ENCODE measurements at regions of chr11 and their contacts with region 1.

Region 1: DNA sequence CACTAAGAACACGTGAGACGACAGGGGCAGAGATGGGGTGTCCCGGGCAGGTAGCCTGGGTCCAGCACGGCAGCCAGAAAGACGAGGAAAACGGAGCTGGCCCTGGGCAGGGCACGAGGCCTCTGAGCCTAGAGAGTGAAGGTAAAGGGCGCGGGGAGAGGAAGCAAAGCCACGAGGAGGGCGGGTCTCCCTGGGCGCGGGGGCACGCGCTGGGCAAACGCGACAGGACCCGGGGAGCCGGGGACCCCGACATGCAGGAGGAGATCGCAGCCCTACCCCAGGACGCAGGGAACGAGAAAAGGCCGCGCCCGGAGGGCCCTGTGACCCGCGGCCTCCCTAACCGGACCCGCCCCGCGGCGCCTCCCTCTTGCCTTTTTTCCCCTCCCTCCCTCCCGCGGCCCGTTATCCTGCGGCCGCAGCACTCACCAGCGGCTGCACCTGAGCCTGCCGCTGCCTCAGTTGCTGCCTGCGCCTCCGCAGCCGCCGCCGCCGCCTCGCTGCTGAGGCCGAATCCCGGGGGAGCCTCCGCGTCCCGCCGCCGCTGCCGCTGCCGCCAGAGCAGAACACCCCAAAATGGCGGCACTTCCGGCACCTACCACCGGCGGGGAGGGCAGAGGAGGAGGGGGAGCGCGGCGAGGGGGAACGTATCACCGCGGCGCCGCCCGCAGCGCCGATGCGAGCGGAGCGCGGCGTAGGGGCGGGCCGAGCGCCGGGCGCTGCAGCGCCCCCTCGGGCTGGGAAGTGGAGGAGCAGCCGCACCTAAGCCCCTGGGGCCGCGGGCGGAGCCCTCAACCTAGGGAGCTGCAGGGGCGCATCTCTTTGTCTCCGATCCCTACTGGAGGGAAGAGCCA is at the start of gene CELF1:
- DNase-seq: peak; percentile 85 to 97 (median 92)
- ATAC-seq: peak; percentile 96
- H3K4me3 ChIP-seq: peak within 1 kb of the TSS; percentile 86 to 92
- H3K4me3 Mint-ChIP-seq: peak within 1 kb of the TSS; percentile 93
- H3K27ac ChIP-seq: peak within 1 kb of the TSS; percentile 69 to 82
- H3K27ac Mint-ChIP-seq: peak within 1 kb of the TSS; percentile 97
- H3K4me1 ChIP-seq: peaks cover 41% of the 10 kb centered on the region
- H3K4me1 Mint-ChIP-seq: peaks cover 45% of the 10 kb centered on the region
- H3K27me3 ChIP-seq: no peaks in the 10 kb centered on the region
- H3K27me3 Mint-ChIP-seq: no peaks in the 10 kb centered on the region
- CTCF ChIP-seq: peak; percentile 85
- total RNA-seq, gene CELF1: 93.2 to 96.1 TPM

Region 2: DNA sequence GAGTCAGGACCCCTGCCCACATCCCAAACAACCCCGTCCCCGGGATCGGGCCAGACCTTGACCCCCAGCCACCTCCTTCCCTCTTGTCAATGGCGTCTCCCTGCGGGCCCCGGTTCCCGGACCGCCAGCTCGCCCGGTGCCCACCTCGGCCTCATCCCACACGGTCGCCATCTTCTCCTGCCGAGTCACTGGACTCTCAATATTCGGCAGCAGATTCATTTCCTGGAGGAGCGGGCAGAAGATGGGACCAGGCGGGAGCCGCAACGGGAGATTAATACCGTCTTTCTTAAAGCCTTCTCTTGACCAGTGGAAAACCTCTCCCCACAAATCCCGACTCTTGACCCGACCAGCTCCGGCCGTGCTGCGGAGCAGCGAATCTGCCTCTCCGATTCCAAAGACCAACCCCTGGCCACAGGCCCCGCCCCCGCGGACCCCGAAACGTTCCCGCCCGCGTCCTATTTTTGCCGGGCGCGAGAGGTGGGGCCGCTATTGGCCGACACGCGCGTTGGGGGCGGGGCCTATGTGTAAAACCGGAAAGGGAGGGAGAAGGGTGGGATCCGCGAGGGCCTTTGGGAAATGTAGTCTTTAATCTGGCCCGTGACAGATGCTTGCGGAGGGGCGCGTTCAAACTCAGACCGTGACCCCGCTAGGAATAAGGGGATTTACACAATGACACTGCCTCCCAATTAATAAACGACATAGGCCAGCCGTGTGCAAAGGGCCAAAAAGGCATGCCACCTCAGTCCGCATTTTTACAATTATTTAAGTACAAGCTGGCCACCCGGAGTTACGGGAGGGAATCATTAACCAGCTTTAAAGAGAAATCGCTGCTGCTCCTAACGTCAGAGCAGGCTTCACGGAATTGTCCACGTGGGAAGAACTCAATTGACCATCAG is 126.5 kb before region 1 on chr11 and contains the start of gene PSMC3:
- CTCF ChIA-PET with region 1: no interaction called
- POLR2A ChIA-PET with region 1: no interaction called
- intact Hi-C with region 1: loop called (anchors 1 kb)
- DNase-seq: peak; percentile 96 to 99 (median 98)
- ATAC-seq: peak; percentile 98
- H3K4me3 ChIP-seq: peak within 1 kb of the TSS; percentile 68 to 98
- H3K4me3 Mint-ChIP-seq: peak within 1 kb of the TSS; percentile 100
- H3K27ac ChIP-seq: peak within 1 kb of the TSS; percentile 77 to 81
- H3K27ac Mint-ChIP-seq: peak within 1 kb of the TSS; percentile 98
- H3K4me1 ChIP-seq: peaks cover 14% of the 10 kb centered on the region
- H3K4me1 Mint-ChIP-seq: peaks cover 28% of the 10 kb centered on the region
- H3K27me3 ChIP-seq: no peaks in the 10 kb centered on the region
- H3K27me3 Mint-ChIP-seq: no peaks in the 10 kb centered on the region
- CTCF ChIP-seq: no peak
- total RNA-seq, gene PSMC3: 58.1 to 63.4 TPM

Region 3: GRCh38 chr11:47485110-47485509 is 67.7 kb before region 1 on chr11:
- CTCF ChIA-PET with region 1: no interaction called
- POLR2A ChIA-PET with region 1: no interaction called
- intact Hi-C with region 1: loop called in 1 of 2 experiments (anchors 5 kb)
- DNase-seq: no peak
- ATAC-seq: no peak
- H3K4me3 ChIP-seq: no peak overlapping the region
- H3K4me3 Mint-ChIP-seq: no peak overlapping the region
- H3K27ac ChIP-seq: no peak overlapping the region
- H3K27ac Mint-ChIP-seq: no peak overlapping the region
- H3K4me1 ChIP-seq: no peaks in the 10 kb centered on the region
- H3K4me1 Mint-ChIP-seq: no peaks in the 10 kb centered on the region
- H3K27me3 ChIP-seq: no peaks in the 10 kb centered on the region
- H3K27me3 Mint-ChIP-seq: no peaks in the 10 kb centered on the region
- CTCF ChIP-seq: no peak

Region 4: DNA sequence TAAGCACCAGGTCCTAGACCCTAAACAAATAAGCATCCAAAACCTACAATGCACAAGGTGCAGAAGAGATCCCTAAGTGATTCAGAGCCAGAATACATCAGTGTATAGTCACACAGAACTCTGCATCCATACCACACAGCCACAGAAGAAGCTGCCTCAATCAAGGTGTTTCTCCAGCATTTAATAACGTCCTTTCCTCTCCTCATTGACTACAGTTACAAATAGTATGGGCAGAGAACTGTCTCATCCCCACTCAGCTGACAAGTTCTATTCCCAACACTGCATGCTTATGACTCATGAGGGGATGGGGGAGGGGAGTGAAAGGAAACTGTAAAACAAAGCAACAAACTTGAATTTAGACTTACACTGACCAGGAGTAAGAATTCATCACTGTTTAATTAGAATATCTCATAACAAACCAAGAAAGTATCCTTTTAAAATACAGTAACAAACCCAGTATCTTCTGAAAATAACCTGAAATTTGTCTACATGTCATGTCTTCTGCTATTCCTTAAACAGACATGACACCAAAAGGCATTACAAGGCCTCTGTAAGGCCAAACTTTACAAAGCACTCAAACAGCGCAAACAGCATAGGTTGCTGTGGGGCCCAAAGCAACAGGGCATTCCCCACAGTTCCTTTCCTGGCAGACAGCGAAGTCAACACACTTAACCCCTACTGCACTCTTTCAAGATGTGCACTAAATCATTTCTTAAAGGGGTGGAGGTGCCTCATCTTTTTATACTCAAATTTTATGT is 29.1 kb before region 1 on chr11:
- CTCF ChIA-PET with region 1: no interaction called
- POLR2A ChIA-PET with region 1: interaction called, 3 read pairs
- intact Hi-C with region 1: loop called in 1 of 2 experiments (anchors 2 kb)
- DNase-seq: peak in 7 of 9 experiments; percentile 14 to 83 (median 41)
- ATAC-seq: peak; percentile 80
- H3K4me3 ChIP-seq: no peak overlapping the region
- H3K4me3 Mint-ChIP-seq: peak overlapping the region; percentile 63
- H3K27ac ChIP-seq: peak overlapping the region; percentile 22 to 64
- H3K27ac Mint-ChIP-seq: peak overlapping the region; percentile 91
- H3K4me1 ChIP-seq: peaks cover 47% of the 10 kb centered on the region
- H3K4me1 Mint-ChIP-seq: peaks cover 66% of the 10 kb centered on the region
- H3K27me3 ChIP-seq: no peaks in the 10 kb centered on the region
- H3K27me3 Mint-ChIP-seq: no peaks in the 10 kb centered on the region
- CTCF ChIP-seq: no peak

Region 5: GRCh38 chr11:47578524-47579460 is 26.0 kb after region 1 on chr11 and contains the starts of genes KBTBD4 and NDUFS3:
- CTCF ChIA-PET with region 1: interaction called, 7 read pairs
- POLR2A ChIA-PET with region 1: interaction called, 5 read pairs
- intact Hi-C with region 1: loop called (anchors 1 kb)
- DNase-seq: peak; percentile 74 to 95 (median 89)
- ATAC-seq: peak; percentile 94
- H3K4me3 ChIP-seq: peak within 1 kb of the TSS; percentile 90 to 92
- H3K4me3 Mint-ChIP-seq: peak within 1 kb of the TSS; percentile 99
- H3K27ac ChIP-seq: peak within 1 kb of the TSS; percentile 76 to 84
- H3K27ac Mint-ChIP-seq: peak within 1 kb of the TSS; percentile 97
- H3K4me1 ChIP-seq: peaks cover 31% of the 10 kb centered on the region
- H3K4me1 Mint-ChIP-seq: peaks cover 54% of the 10 kb centered on the region
- H3K27me3 ChIP-seq: no peaks in the 10 kb centered on the region
- H3K27me3 Mint-ChIP-seq: no peaks in the 10 kb centered on the region
- CTCF ChIP-seq: no peak
- total RNA-seq, gene KBTBD4: 31.8 to 32.6 TPM
- total RNA-seq, gene NDUFS3: 159 to 179 TPM

Region 6: GRCh38 chr11:47715082-47715669 is 162.4 kb after region 1 on chr11 and contains the start of gene AGBL2:
- CTCF ChIA-PET with region 1: no interaction called
- POLR2A ChIA-PET with region 1: no interaction called
- intact Hi-C with region 1: loop called in 1 of 2 experiments (anchors 10 kb)
- DNase-seq: peak; percentile 70 to 91 (median 86)
- ATAC-seq: peak; percentile 99
- H3K4me3 ChIP-seq: peak within 1 kb of the TSS; percentile 66 to 88
- H3K4me3 Mint-ChIP-seq: peak within 1 kb of the TSS; percentile 96
- H3K27ac ChIP-seq: peak within 1 kb of the TSS; percentile 81 to 88
- H3K27ac Mint-ChIP-seq: peak within 1 kb of the TSS; percentile 94
- H3K4me1 ChIP-seq: peaks cover 14% of the 10 kb centered on the region
- H3K4me1 Mint-ChIP-seq: peaks cover 21% of the 10 kb centered on the region
- H3K27me3 ChIP-seq: no peaks in the 10 kb centered on the region
- H3K27me3 Mint-ChIP-seq: no peaks in the 10 kb centered on the region
- CTCF ChIP-seq: no peak
- total RNA-seq, gene AGBL2: 3.6 to 5.0 TPM

Region 7: GRCh38 chr11:47847892-47848635 is 295.3 kb after region 1 on chr11 and contains the start of gene NUP160:
- CTCF ChIA-PET with region 1: no interaction called
- POLR2A ChIA-PET with region 1: interaction called, 3 read pairs
- intact Hi-C with region 1: loop called (anchors 10 kb)
- DNase-seq: peak; percentile 70 to 92 (median 88)
- ATAC-seq: peak; percentile 87
- H3K4me3 ChIP-seq: peak within 1 kb of the TSS; percentile 89 to 99
- H3K4me3 Mint-ChIP-seq: peak within 1 kb of the TSS; percentile 100
- H3K27ac ChIP-seq: peak within 1 kb of the TSS; percentile 88 to 95
- H3K27ac Mint-ChIP-seq: peak within 1 kb of the TSS; percentile 99
- H3K4me1 ChIP-seq: peaks cover 35% of the 10 kb centered on the region
- H3K4me1 Mint-ChIP-seq: peaks cover 45% of the 10 kb centered on the region
- H3K27me3 ChIP-seq: no peaks in the 10 kb centered on the region
- H3K27me3 Mint-ChIP-seq: no peaks in the 10 kb centered on the region
- CTCF ChIP-seq: no peak
- total RNA-seq, gene NUP160: 38.6 to 46.6 TPM

Region 8: DNA sequence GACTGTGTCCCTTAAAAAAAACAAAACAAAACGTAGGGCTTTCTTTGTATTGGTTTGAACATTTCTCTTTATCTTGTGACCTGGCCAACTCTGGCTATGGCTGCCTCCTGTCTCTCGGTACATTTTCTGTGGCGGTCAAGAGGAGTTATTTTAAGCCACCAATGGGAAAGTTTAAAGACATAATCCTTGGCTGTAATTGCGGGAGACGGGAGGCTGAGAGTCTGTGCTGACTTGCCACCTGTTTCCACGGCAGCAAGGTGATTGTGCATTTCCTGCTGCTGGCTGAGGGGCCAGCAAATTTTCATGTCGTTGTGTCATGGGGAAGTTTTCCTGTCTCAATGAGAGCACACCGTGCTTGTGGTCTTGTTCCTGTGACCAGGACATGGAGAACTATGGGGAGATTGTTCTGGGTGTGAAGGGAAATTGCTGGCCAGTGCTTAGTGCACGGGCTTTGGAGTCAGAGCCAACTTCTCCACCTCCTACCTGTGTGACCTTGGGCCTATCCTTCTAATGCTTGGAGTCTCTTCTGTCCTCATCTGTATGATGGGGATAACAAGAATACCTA is 438.6 kb after region 1 on chr11:
- CTCF ChIA-PET with region 1: no interaction called
- POLR2A ChIA-PET with region 1: no interaction called
- intact Hi-C with region 1: no loop called
- DNase-seq: peak in 4 of 9 experiments; percentile 22 to 48 (median 32)
- ATAC-seq: peak; percentile 61
- H3K4me3 ChIP-seq: peak overlapping the region; percentile 2 to 11
- H3K4me3 Mint-ChIP-seq: peak overlapping the region; percentile 72
- H3K27ac ChIP-seq: peak overlapping the region in 1 of 2 experiments; percentile 33
- H3K27ac Mint-ChIP-seq: peak overlapping the region; percentile 74
- H3K4me1 ChIP-seq: peaks cover 14% of the 10 kb centered on the region
- H3K4me1 Mint-ChIP-seq: peaks cover 53% of the 10 kb centered on the region
- H3K27me3 ChIP-seq: no peaks in the 10 kb centered on the region
- H3K27me3 Mint-ChIP-seq: no peaks in the 10 kb centered on the region
- CTCF ChIP-seq: no peak